ENCODE measurements at regions of chr5 and their contacts with region 1.

Region 1: GRCh38 chr5:17400724-17401464 is 97.1 kb upstream of the TAF11L2 start:
- DNase-seq: no peak
- H3K4me3 ChIP-seq: no peak overlapping the region
- CTCF ChIP-seq: no peak
- POLR2A ChIP-seq: no peak

Region 2: DNA sequence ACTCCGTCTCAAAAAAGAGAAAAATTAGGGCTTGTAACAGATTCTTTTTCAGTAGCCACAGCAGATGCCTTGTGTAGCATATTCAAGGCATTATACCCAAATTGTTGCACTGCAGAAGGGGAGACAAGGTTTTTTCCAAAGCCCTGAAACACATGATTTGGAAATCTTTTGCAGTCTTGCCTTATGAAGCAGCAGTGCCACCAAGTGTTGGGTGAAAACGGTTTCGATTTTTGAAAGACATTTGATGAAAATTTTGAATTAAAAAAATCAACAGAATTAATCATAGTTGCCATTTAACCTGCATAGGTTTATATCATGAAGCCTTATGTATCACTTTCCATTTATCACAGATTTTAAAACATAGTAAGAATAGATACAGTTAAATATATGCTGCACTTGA is 712.8 kb after region 1 on chr5:
- intact Hi-C with region 1: loop called (anchors 10 kb)
- DNase-seq: no peak
- H3K4me3 ChIP-seq: no peak overlapping the region
- CTCF ChIP-seq: no peak
- POLR2A ChIP-seq: no peak

Measured in lower leg skin (tissue), 4 donors.